GM12878 (cell line): ENCODE measurements at regions of chr10 and their contacts with region 1.

Region 1: DNA sequence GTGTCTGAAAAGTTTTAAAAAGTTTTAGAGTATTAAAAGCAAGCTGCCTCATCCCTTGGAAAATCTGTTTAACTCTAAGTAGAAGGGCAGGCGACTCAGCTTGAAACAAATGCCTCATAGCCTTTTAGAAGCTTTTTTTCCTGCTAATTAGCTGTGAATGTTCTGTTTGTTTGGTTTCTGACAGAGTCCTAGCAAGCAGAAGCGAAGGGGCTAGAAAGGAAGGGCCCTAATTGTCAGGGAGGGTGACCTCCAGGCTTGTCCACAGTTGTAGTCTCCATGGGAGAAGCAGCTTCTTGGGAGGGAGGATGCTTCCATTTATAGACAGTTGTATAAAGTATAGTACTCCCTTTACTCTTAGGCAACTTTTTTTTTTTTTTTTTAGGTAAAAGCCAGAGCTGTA is 90.9 kb downstream of the DNAJC1 start:
- DNase-seq: no peak
- ATAC-seq: no peak
- H3K4me3 ChIP-seq: no peak overlapping the region
- H3K27ac ChIP-seq: no peak overlapping the region
- H3K4me1 ChIP-seq: peaks cover 6% of the 10 kb centered on the region; the same call in 1 of the 2 replicates
- H3K27me3 ChIP-seq: no peaks in the 10 kb centered on the region
- CTCF ChIP-seq: no peak
- EP300 ChIP-seq: no peak
- POLR2A ChIP-seq: no peak
- RAD21 ChIP-seq: no peak

Region 2: DNA sequence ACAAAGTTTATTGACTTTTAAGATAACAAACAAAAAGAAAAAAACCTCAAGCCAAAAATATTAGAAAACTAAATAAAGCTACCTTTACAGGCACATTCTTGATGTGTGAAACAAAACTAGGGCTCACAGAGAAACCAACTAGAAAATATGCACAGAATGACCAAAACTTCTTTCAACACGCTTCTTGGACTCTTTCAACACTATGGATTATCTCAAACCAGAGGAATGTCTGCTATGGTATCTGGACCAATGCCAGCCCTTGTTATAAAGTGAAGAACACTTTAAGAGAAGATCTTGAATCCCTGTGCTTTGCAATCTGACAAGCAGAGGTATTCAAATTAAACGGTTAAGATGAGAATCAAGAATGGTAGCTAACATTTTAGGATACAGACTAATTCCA is 14.3 kb after region 1 on chr10:
- CTCF ChIA-PET with region 1: interaction called, 4 read pairs
- POLR2A ChIA-PET with region 1: interaction called, 3 read pairs
- RAD21 ChIA-PET with region 1: no interaction called
- SMC1A ChIA-PET with region 1: interaction called, 10 read pairs
- in situ Hi-C with region 1: no loop called
- intact Hi-C with region 1: no loop called
- DNase-seq: no peak
- ATAC-seq: no peak
- H3K4me3 ChIP-seq: no peak overlapping the region
- H3K27ac ChIP-seq: no peak overlapping the region
- H3K4me1 ChIP-seq: no peaks in the 10 kb centered on the region
- H3K27me3 ChIP-seq: no peaks in the 10 kb centered on the region
- CTCF ChIP-seq: no peak
- EP300 ChIP-seq: no peak
- POLR2A ChIP-seq: no peak
- RAD21 ChIP-seq: no peak

Region 3: GRCh38 chr10:21975378-21975990 is 62.9 kb after region 1 on chr10:
- CTCF ChIA-PET with region 1: no interaction called
- POLR2A ChIA-PET with region 1: no interaction called
- RAD21 ChIA-PET with region 1: no interaction called
- SMC1A ChIA-PET with region 1: no interaction called
- in situ Hi-C with region 1: no loop called
- intact Hi-C with region 1: no loop called
- DNase-seq: no peak
- ATAC-seq: 0 out of 3 replicates have a peak, but pooled peaks have one; percentile 31
- H3K4me3 ChIP-seq: no peak overlapping the region
- H3K27ac ChIP-seq: no peak overlapping the region
- H3K4me1 ChIP-seq: peaks cover 3% of the 10 kb centered on the region; the same call in 1 of the 2 replicates
- H3K27me3 ChIP-seq: no peaks in the 10 kb centered on the region
- CTCF ChIP-seq: no peak
- EP300 ChIP-seq: no peak
- POLR2A ChIP-seq: no peak
- RAD21 ChIP-seq: no peak